ENCODE measurements at regions of chr22 and their contacts with region 1.

Region 1: GRCh38 chr22:25536589-25536988 is 27.9 kb upstream of the GRK3 start:
- DNase-seq: peak in 1 of 5 donors; percentile 46
- ATAC-seq: peak; percentile 73 to 89 (median 81)
- H3K4me3 ChIP-seq: no peak overlapping the region
- H3K27ac ChIP-seq: peak overlapping the region in 1 of 12 donors; percentile 18
- H3K4me1 ChIP-seq: peaks cover 0 to 12% (median 0%) of the 10 kb centered on the region in 12 donors
- H3K27me3 ChIP-seq: no peaks in the 10 kb centered on the region
- CTCF ChIP-seq: no peak
- POLR2A ChIP-seq: no peak

Region 2: GRCh38 chr22:25488244-25489020 is 48.2 kb before region 1 on chr22:
- intact Hi-C with region 1: loop called in 1 of 10 experiments (anchors 5 kb)
- DNase-seq: peak; percentile 68 to 83 (median 82)
- ATAC-seq: peak; percentile 75 to 87 (median 80)
- H3K4me3 ChIP-seq: no peak overlapping the region
- H3K27ac ChIP-seq: peak overlapping the region in 3 of 12 donors; percentile 3 to 8 (median 8)
- H3K4me1 ChIP-seq: peaks cover 0 to 20% (median 11%) of the 10 kb centered on the region in 12 donors
- H3K27me3 ChIP-seq: no peaks in the 10 kb centered on the region
- CTCF ChIP-seq: no peak
- POLR2A ChIP-seq: no peak

Region 3: DNA sequence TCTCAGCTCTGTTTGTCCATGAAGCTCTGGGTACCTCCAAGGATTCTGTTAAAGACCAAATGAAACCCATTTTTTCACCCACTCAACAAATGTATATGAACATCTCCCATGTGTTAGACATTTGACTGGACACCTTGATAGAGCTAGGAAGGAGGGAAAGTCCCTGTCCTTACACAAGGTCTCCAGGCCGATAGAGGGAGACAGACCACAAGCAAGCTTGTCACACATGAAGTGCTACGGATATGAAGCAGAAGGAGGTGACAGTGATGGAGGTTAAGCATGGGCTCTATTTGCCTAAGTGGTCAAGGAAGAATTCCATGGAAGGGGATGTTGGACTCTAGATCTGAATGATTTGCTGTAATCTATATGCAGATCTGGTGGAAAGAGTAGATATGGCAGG is 343.9 kb after region 1 on chr22:
- intact Hi-C with region 1: no loop called
- DNase-seq: no peak
- ATAC-seq: peak in 2 of 4 donors; percentile 16 to 23
- H3K4me3 ChIP-seq: no peak overlapping the region
- H3K27ac ChIP-seq: no peak overlapping the region
- H3K4me1 ChIP-seq: no peaks in the 10 kb centered on the region
- H3K27me3 ChIP-seq: no peaks in the 10 kb centered on the region
- CTCF ChIP-seq: peak in 1 of 12 donors; percentile 9
- POLR2A ChIP-seq: no peak

Measured in heart left ventricle (tissue), 16 donors.